A549 (cell line): ENCODE measurements at regions of chr12 and their contacts with region 1.

Region 1: DNA sequence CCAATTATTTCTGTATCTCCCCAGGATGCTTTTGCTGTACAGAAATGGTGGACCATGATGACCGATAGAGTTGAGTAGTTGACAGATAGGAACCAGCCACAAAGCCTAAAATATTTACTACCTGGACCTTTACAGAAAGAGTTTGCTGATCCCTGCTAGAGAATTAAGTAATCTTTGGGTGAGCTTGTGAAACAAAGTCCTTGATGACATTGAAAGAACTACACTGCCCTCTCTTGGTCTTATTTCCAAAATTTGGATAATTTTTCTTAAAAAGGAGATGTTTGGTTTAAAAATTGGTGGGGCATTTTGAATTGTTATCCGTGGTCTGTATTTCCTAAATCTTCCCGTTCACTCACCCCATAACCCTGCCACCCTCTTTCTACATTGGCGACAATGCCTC is 13.7 kb upstream of the TCTN1 start:
- DNase-seq: peak; percentile 56 to 77
- ATAC-seq: peak in 1 of 2 experiments; percentile 28; a peak in 2 of 6 replicates
- H3K4me3 ChIP-seq: no peak overlapping the region
- H3K27ac ChIP-seq: no peak overlapping the region
- H3K4me1 ChIP-seq: no peaks in the 10 kb centered on the region
- CTCF ChIP-seq: peak; percentile 86
- EP300 ChIP-seq: no peak
- POLR2A ChIP-seq: no peak
- RAD21 ChIP-seq: peak; percentile 91 to 95

Region 2: GRCh38 chr12:110449799-110450497 is 150.3 kb before region 1 on chr12 and contains the start of gene ARPC3:
- CTCF ChIA-PET with region 1: interaction called, 160 read pairs
- POLR2A ChIA-PET with region 1: interaction called, 5 read pairs
- DNase-seq: peak; percentile 86 to 98
- ATAC-seq: peak; percentile 97 to 100
- H3K4me3 ChIP-seq: peak within 1 kb of the TSS; percentile 73
- H3K27ac ChIP-seq: peak within 1 kb of the TSS; percentile 88 to 98
- H3K4me1 ChIP-seq: peaks cover 13% of the 10 kb centered on the region; the same call in 1 of the 3 replicates
- CTCF ChIP-seq: peak; percentile 73
- EP300 ChIP-seq: no peak
- POLR2A ChIP-seq: peak; percentile 50; the same call in 1 of the 2 replicates
- RAD21 ChIP-seq: peak; percentile 84 to 89
- polyA plus RNA-seq, gene ARPC3: 83.3 and 171 TPM in 2 replicates

Region 3: GRCh38 chr12:110498984-110499706 is 101.1 kb before region 1 on chr12:
- CTCF ChIA-PET with region 1: interaction called, 10 read pairs
- POLR2A ChIA-PET with region 1: no interaction called
- DNase-seq: peak in 1 of 2 experiments; percentile 16
- ATAC-seq: no peak
- H3K4me3 ChIP-seq: no peak overlapping the region
- H3K27ac ChIP-seq: no peak overlapping the region
- H3K4me1 ChIP-seq: peaks cover 25% of the 10 kb centered on the region
- CTCF ChIP-seq: no peak
- EP300 ChIP-seq: no peak
- POLR2A ChIP-seq: no peak
- RAD21 ChIP-seq: no peak

Region 4: DNA sequence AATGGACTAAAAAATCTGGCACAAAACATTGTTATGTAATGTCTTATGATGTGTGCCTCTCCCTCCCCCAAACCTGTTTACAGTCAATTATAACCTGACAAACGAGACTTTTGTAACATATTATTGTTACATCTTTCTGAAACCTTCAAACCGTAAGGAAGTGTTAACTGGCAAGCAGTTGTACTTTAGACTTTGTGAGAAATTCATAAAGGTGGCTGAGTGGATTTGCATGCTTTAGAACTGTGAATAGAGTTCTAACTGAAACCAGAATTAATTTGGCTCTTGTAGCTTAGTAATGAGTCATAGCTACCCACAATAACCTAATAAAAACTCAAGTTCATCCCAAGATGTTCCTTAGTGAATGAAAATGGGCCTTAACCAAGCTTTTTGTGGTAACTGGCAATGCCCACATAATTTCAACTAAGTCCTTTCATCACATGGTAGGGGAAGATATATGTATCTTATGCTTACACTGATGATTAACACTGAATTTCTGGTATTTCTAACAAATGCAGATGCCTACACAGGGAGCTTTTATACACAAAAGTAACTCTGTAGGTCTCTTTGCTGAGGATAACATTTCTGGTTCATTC is 68.4 kb before region 1 on chr12:
- CTCF ChIA-PET with region 1: interaction called, 30 read pairs
- POLR2A ChIA-PET with region 1: no interaction called
- DNase-seq: no peak
- ATAC-seq: no peak
- H3K4me3 ChIP-seq: no peak overlapping the region
- H3K27ac ChIP-seq: no peak overlapping the region
- H3K4me1 ChIP-seq: peaks cover 15% of the 10 kb centered on the region
- CTCF ChIP-seq: no peak
- EP300 ChIP-seq: no peak
- POLR2A ChIP-seq: no peak
- RAD21 ChIP-seq: no peak

Region 5: DNA sequence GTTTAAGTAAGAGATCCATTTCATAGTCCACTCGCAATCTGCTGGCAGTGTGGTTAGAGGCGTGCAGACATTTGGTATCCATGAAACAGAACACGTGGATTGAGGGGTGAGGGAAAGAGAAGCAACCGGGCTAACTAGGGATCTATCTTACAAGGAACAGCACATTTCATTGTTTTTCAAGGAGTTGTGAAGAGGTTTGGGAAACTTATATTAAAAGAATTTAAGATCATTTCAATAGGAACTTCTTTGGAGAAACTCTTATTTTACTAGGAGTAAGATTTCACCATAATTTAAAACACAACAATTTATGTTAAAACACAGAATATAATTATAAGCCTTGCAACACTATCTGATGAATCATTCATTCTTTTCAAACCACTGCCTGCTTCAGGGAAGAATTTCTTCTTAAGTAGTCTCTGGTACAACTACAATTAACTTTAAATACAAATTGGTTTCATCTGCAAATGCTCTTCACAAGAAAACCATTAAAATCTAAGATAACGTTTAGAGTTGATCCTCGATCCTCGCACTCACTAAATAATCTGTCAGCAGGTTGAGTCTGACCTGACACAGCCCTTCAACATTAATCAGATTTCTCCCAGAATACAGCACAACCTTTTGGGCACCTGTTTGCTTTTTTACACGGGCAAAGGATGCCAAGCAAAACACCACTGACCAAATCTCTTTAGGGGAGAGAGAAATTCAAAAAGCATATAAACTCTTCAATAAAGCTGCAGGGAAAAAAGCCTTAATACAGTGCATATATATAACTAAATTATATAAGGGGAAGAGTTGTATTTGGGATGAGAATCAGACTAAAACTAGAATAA is 44.5 kb before region 1 on chr12:
- CTCF ChIA-PET with region 1: interaction called, 138 read pairs
- POLR2A ChIA-PET with region 1: no interaction called
- DNase-seq: no peak
- ATAC-seq: no peak
- H3K4me3 ChIP-seq: no peak overlapping the region
- H3K27ac ChIP-seq: no peak overlapping the region
- H3K4me1 ChIP-seq: peaks cover 21% of the 10 kb centered on the region
- CTCF ChIP-seq: no peak
- EP300 ChIP-seq: no peak
- POLR2A ChIP-seq: no peak
- RAD21 ChIP-seq: no peak

Region 6: GRCh38 chr12:110583137-110584059 is 16.9 kb before region 1 on chr12 and contains the start of gene PPTC7:
- CTCF ChIA-PET with region 1: interaction called, 130 read pairs
- POLR2A ChIA-PET with region 1: no interaction called
- DNase-seq: peak; percentile 89 to 95
- ATAC-seq: peak; percentile 89 to 96
- H3K4me3 ChIP-seq: peak within 1 kb of the TSS; percentile 93
- H3K27ac ChIP-seq: peak within 1 kb of the TSS; percentile 91 to 96
- H3K4me1 ChIP-seq: peaks cover 25% of the 10 kb centered on the region
- CTCF ChIP-seq: no peak
- EP300 ChIP-seq: no peak
- POLR2A ChIP-seq: peak; percentile 75
- RAD21 ChIP-seq: no peak
- polyA plus RNA-seq, gene PPTC7: 27.1 and 30.3 TPM in 2 replicates